ENCODE measurements at regions of chr4 and their contacts with region 1.

Region 1: GRCh38 chr4:70687821-70688794 is at the start of gene UTP3:
- DNase-seq: peak; percentile 91 to 99 (median 94)

Region 2: GRCh38 chr4:70704331-70705145 is 16.4 kb after region 1 on chr4:
- intact Hi-C with region 1: loop called (anchors 2 kb)
- DNase-seq: peak; percentile 43 to 95 (median 68)

Region 3: GRCh38 chr4:70721747-70722146 is 33.6 kb after region 1 on chr4 and contains the start of gene RUFY3:
- intact Hi-C with region 1: loop called (anchors 5 kb)
- DNase-seq: peak; percentile 56 to 95 (median 72)

Region 4: DNA sequence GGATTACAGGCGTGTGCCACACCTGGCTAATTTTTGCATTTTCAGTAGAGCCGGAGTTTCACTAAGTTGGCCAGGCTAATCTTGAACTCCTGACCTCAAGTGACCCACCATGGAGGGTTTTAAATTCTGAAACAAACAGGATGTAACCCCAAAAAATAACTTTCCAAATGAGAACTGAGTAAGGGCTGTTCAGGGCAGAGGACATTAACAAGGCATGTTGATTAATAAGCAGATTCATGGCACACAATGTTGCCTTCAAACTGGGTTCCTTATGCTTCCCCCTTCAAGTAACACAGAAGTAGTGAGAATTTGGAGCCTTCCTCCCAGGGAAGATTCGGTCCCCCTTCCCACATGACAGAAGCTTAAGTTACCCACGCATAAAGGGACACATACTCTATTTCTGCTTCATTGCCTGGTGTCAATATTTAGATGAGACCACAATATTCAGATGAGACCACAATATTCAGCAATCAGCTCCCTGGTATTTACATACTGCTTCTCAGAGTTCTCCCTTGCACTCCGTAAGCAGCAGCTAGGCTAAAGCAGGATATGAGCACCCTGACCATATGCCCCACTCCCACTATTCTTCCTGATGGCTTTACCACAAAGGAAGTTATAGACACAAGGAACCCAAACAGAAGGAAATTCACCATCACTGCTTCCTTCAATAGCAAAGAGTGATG is 130.2 kb after region 1 on chr4:
- intact Hi-C with region 1: no loop called
- DNase-seq: no peak

Measured in posterior cingulate gyrus (tissue), 11 donors.